Endothelial cell of umbilical vein (primary cell): ENCODE measurements at regions of chr3 and their contacts with region 1.

Region 1: GRCh38 chr3:132029182-132029902 is 5.5 kb downstream of the CPNE4 start:
- DNase-seq: peak; percentile 73
- H3K4me3 ChIP-seq: no peak overlapping the region
- H3K27ac ChIP-seq: no peak overlapping the region
- H3K4me1 ChIP-seq: no peaks in the 10 kb centered on the region
- H3K27me3 ChIP-seq: peaks cover 20 to 26% of the 10 kb centered on the region in 2 experiments
- CTCF ChIP-seq: peak; percentile 69 to 94
- POLR2A ChIP-seq: no peak

Region 2: DNA sequence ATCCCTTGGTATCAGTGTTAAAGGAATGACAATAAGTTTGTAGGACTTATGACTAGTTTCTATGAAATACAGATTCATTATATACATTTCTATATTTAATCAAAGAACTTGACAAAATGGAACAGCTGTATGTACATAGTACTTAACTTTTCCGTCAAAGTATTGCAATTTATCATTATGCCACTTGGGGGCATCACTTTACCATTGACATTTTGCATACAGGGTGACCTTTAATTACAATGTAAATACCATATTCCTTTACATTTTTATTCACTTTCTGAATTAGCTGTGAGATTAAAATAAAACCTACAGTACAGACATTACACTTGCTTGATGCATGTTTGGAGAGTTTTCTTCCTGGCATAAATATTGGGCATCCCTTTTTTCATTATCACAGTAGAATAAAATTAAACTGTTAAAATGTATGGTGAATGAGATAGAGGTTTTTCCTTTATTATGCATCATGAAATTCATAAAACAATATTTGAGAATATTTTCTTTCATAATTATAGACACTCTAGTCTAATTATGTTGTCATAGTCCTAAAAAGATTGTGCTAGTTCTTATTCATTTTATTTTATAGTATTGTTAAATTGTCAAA is 995.8 kb before region 1 on chr3:
- CTCF ChIA-PET with region 1: interaction called, 42 read pairs
- POLR2A ChIA-PET with region 1: interaction called, 3 read pairs
- dilution Hi-C with region 1: no loop called
- intact Hi-C with region 1: loop called (anchors 1 kb)
- DNase-seq: peak; percentile 75
- H3K4me3 ChIP-seq: no peak overlapping the region
- H3K27ac ChIP-seq: no peak overlapping the region
- H3K4me1 ChIP-seq: no peaks in the 10 kb centered on the region
- H3K27me3 ChIP-seq: no peaks in the 10 kb centered on the region
- CTCF ChIP-seq: peak; percentile 32
- POLR2A ChIP-seq: no peak

Region 3: DNA sequence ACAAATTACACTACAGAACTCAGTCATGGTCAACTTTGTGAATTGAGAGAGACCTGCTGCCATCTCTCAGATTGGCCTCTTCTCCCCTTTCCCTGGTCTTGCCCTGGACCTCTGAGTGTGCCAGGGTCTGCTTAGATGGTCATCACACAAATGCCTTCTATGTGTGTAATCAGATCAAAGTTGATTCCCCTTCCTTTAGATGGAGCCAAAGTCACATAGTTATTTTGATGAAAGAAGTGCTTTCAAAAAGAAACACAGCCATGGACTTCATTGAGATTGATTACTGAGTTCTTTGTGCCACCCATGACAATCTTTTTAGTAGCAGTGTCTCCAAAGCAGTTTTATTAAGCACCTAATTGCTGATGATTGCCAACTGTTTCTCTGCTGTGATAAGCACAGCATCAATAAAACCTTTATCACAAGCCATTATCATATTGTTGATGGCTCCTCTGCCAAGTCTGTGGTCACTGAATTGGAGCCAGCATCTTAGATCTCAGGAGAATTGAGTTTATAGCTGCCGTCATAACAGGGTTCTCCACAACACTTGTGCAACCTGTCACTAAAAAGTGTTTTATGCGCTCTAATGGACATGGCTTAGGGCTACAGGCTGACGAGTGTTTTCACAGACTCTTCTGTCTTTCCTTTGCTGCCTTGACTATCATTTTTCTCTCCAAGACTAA is 797.5 kb before region 1 on chr3:
- CTCF ChIA-PET with region 1: interaction called, 4 read pairs
- POLR2A ChIA-PET with region 1: no interaction called
- dilution Hi-C with region 1: no loop called
- intact Hi-C with region 1: loop called (anchors 5 kb)
- DNase-seq: peak; percentile 8
- H3K4me3 ChIP-seq: no peak overlapping the region
- H3K27ac ChIP-seq: no peak overlapping the region
- H3K4me1 ChIP-seq: no peaks in the 10 kb centered on the region
- H3K27me3 ChIP-seq: no peaks in the 10 kb centered on the region
- CTCF ChIP-seq: no peak
- POLR2A ChIP-seq: no peak

Region 4: DNA sequence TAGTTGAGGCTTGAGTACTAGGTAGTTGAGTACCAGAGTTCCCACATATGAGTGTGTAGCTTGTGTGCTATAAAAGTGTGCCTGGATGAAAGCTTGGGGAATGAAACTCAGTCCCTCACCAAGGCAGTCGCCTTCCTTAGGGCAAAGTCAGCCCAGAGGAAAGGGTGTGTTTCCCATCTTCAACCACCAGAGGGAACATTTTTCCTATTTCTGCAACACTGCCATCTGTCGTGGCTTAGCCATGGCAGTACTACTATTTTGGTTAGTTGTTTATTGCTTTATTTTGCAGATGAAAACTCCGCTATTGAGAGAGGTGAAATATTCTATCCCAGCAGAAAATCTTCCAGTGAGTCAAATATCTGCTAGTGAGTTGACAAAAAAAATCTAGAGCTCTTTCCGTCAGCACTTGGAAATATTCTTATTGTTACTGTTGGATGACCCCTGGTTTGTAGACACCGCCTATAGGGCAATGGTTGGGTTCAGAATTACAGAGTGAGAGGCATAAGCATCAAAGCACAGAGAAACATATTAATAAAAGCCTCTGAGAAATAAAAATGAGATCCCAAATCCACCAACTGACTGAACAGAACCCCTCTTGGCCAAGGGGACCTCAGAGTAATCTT is 234.5 kb before region 1 on chr3:
- CTCF ChIA-PET with region 1: interaction called, 45 read pairs
- POLR2A ChIA-PET with region 1: no interaction called
- dilution Hi-C with region 1: no loop called
- intact Hi-C with region 1: loop called (anchors 1 kb)
- DNase-seq: peak; percentile 58
- H3K4me3 ChIP-seq: no peak overlapping the region
- H3K27ac ChIP-seq: no peak overlapping the region
- H3K4me1 ChIP-seq: no peaks in the 10 kb centered on the region
- H3K27me3 ChIP-seq: no peaks in the 10 kb centered on the region
- CTCF ChIP-seq: peak; percentile 70 to 76
- POLR2A ChIP-seq: no peak

Region 5: DNA sequence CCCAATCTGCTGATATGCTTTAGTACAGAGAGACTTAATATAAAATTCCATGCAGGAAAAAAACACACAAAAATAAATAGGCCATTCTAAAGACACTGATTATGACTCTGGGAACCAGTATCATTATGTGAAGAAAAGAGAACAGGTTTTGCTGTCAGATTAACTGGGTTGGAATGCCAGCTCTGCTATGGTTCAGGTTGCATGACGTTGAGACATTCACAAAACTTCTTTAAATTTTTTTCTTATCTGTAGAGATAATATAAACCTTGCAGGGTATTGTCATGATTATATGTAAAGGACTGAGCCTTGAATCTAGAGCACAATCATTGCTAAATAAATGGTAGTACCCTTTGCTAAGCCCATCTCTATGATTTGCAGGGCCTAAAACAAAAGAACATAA is 80.5 kb before region 1 on chr3:
- CTCF ChIA-PET with region 1: no interaction called
- POLR2A ChIA-PET with region 1: no interaction called
- dilution Hi-C with region 1: no loop called
- intact Hi-C with region 1: no loop called
- DNase-seq: no peak
- H3K4me3 ChIP-seq: no peak overlapping the region
- H3K27ac ChIP-seq: no peak overlapping the region
- H3K4me1 ChIP-seq: no peaks in the 10 kb centered on the region
- H3K27me3 ChIP-seq: no peaks in the 10 kb centered on the region
- CTCF ChIP-seq: no peak
- POLR2A ChIP-seq: no peak

Region 6: DNA sequence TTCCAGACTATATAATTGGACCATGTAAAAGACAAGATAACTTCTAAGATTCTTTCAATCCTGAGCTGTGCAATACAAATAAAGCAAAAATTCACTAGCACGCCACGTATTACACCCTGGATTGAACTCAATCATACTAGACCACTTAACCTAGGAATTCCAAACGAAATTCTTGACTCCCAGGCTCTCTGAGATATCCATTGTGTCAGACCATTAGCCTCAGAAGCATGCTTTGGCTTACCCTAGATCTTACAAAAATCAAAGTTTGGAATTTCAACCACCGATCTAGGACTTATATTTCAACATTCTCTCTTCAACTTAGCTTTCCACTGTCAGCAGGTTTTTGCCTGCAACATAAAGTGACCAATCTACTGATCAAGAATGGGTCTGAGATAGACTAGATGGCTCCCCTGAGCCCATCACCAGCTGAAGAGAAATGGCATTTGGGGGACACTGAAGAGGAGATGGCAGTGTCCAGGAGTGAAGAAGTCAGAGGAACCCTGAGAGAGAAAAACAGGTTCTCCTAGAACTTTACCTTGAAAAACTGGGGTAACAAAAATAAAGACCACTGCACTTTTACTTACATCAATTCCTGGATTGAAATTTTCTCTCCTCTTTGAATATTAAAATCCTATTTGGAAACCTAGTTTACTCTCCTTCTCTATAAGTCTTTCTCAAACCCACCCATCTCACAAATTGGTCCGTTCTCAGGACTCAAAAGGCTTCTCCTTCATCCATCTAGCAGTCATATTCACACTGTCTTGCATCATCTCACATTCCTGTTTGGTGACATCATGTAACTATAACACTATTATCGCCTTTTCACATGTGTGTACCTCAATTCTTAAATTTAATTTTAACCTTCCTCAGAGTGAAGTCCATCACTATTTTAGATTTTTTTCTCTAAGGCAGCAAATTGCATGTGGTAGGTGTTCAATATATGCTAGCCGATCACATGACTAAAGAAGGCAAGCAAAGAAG is 13.0 kb before region 1 on chr3:
- CTCF ChIA-PET with region 1: interaction called, 42 read pairs
- POLR2A ChIA-PET with region 1: no interaction called
- dilution Hi-C with region 1: no loop called
- intact Hi-C with region 1: no loop called
- DNase-seq: no peak
- H3K4me3 ChIP-seq: no peak overlapping the region
- H3K27ac ChIP-seq: no peak overlapping the region
- H3K4me1 ChIP-seq: no peaks in the 10 kb centered on the region
- H3K27me3 ChIP-seq: peaks cover 0 to 2% of the 10 kb centered on the region in 2 experiments
- CTCF ChIP-seq: no peak
- POLR2A ChIP-seq: no peak